ENCODE measurements at regions of chr6 and their contacts with region 1.

Region 1: GRCh38 chr6:127266178-127266891 is at the start of gene RNF146:
- DNase-seq: peak; percentile 55 to 81 (median 75)
- ATAC-seq: peak; percentile 86
- H3K4me3 ChIP-seq: peak within 1 kb of the TSS; percentile 96
- H3K4me3 Mint-ChIP-seq: peak within 1 kb of the TSS; percentile 92 to 100 (median 96)
- H3K27ac ChIP-seq: peak within 1 kb of the TSS; percentile 95
- H3K27ac Mint-ChIP-seq: peak within 1 kb of the TSS; percentile 91 to 100 (median 98)
- H3K4me1 ChIP-seq: peaks cover 12 to 15% of the 10 kb centered on the region in 2 donors
- H3K4me1 Mint-ChIP-seq: peaks cover 28 to 53% (median 41%) of the 10 kb centered on the region in 7 donors
- H3K27me3 ChIP-seq: no peaks in the 10 kb centered on the region
- H3K27me3 Mint-ChIP-seq: peaks cover 0 to 19% (median 0%) of the 10 kb centered on the region in 5 donors
- total RNA-seq, gene RNF146: 17.6 to 38.1 (median 20.8) TPM

Region 2: GRCh38 chr6:125301435-125302391 is 1964.6 kb before region 1 on chr6 and contains the start of gene HDDC2:
- CTCF ChIA-PET with region 1: no interaction called
- POLR2A ChIA-PET with region 1: no interaction called
- intact Hi-C with region 1: loop called (anchors 2 to 5 kb)
- DNase-seq: peak; percentile 23 to 66 (median 33)
- ATAC-seq: peak; percentile 66
- H3K4me3 ChIP-seq: peak within 1 kb of the TSS; percentile 61
- H3K4me3 Mint-ChIP-seq: peak within 1 kb of the TSS; percentile 83 to 95 (median 92)
- H3K27ac ChIP-seq: peak within 1 kb of the TSS; percentile 76
- H3K27ac Mint-ChIP-seq: peak within 1 kb of the TSS; percentile 64 to 95 (median 92)
- H3K4me1 ChIP-seq: peaks cover 25 to 34% of the 10 kb centered on the region in 2 donors
- H3K4me1 Mint-ChIP-seq: peaks cover 43 to 65% (median 63%) of the 10 kb centered on the region in 7 donors
- H3K27me3 ChIP-seq: no peaks in the 10 kb centered on the region
- H3K27me3 Mint-ChIP-seq: peaks cover 0 to 29% (median 0%) of the 10 kb centered on the region in 5 donors
- total RNA-seq, gene HDDC2: 33.4 to 58.5 (median 54.8) TPM

Region 3: DNA sequence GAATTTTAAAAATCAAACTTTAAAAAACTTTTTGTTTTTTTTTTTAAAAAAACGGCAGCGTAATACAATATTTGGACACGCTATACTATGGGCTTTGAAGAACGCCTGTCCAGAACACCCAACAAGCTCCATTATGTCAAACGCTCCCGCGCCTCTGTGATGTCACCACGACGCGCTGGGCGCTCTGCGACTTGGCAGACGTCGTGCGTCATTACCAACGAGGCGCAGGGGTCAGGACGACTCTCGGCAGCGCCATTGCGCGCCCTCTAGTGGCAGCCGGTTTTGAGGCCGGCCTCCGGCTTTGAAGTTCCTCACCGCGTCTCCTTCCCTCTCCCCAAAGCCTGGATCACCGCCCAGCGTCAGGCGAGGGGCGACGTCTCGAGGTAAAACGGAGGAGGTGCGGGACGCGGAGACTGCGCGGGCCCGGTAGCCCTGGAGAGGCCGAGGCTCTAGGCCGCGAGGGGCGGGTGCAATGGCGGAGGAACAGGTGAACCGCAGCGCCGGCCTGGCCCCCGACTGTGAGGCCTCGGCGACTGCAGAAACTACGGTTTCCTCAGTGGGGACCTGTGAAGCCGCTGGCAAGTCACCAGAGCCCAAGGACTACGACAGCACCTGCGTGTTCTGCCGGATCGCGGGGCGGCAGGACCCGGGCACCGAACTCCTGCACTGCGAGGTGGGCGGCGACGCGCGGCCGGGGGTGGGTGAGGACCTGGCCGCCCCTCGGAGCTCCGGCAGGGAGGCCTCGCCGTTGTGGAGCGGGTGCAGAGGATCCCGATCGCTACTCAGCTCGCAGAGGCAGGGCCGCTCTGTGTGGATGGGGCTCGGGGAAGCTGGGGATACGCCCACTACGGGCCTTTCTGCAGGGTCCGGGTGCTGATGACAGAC is 1309.6 kb before region 1 on chr6 and contains the start of gene HINT3:
- CTCF ChIA-PET with region 1: no interaction called
- POLR2A ChIA-PET with region 1: no interaction called
- intact Hi-C with region 1: loop called in 1 of 2 experiments (anchors 1 kb)
- DNase-seq: peak; percentile 94 to 98 (median 97)
- ATAC-seq: peak; percentile 96
- H3K4me3 ChIP-seq: peak within 1 kb of the TSS; percentile 78
- H3K4me3 Mint-ChIP-seq: peak within 1 kb of the TSS in 1 of 10 donors; percentile 69
- H3K27ac ChIP-seq: peak within 1 kb of the TSS; percentile 98
- H3K27ac Mint-ChIP-seq: peak within 1 kb of the TSS in 3 of 9 donors; percentile 62 to 76 (median 73)
- H3K4me1 ChIP-seq: peaks cover 16 to 18% of the 10 kb centered on the region in 2 donors
- H3K4me1 Mint-ChIP-seq: peaks cover 0 to 22% (median 7%) of the 10 kb centered on the region in 7 donors
- H3K27me3 ChIP-seq: no peaks in the 10 kb centered on the region
- H3K27me3 Mint-ChIP-seq: peaks cover 0 to 7% (median 5%) of the 10 kb centered on the region in 5 donors
- total RNA-seq, gene HINT3: 7.7 to 12.4 (median 9.5) TPM

Region 4: GRCh38 chr6:125995972-125996580 is 1270.3 kb before region 1 on chr6:
- CTCF ChIA-PET with region 1: no interaction called
- POLR2A ChIA-PET with region 1: no interaction called
- intact Hi-C with region 1: loop called in 1 of 2 experiments (anchors 1 kb)
- DNase-seq: peak; percentile 51 to 78 (median 72)
- ATAC-seq: peak; percentile 99
- H3K4me3 ChIP-seq: peak overlapping the region; percentile 42
- H3K4me3 Mint-ChIP-seq: peak overlapping the region; percentile 66 to 87 (median 77)
- H3K27ac ChIP-seq: no peak overlapping the region
- H3K27ac Mint-ChIP-seq: peak overlapping the region in 6 of 9 donors; percentile 8 to 63 (median 24)
- H3K4me1 ChIP-seq: no peaks in the 10 kb centered on the region
- H3K4me1 Mint-ChIP-seq: peaks cover 10 to 44% (median 41%) of the 10 kb centered on the region in 7 donors
- H3K27me3 ChIP-seq: no peaks in the 10 kb centered on the region
- H3K27me3 Mint-ChIP-seq: no peaks in the 10 kb centered on the region

Region 5: DNA sequence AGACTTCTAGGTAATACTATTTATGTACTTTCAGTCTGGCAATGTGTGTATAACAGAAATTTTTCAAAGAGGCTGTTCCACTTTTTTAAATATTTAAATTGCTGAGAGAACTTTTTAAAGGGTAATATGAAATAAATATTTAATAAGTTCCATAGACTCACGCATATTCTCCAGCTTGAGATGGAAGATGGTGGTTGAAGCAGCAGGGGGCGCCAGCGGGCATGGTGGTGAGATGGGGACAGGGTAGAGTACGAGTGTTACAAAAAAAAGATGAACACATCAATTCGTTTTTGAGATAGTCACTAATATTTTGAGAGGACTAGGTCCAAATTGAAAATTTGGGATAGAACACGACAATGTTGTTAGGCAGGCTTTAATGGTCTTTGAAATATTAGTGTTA is 79.4 kb before region 1 on chr6:
- CTCF ChIA-PET with region 1: interaction called, 3 read pairs
- POLR2A ChIA-PET with region 1: no interaction called
- intact Hi-C with region 1: loop called (anchors 1 to 2 kb)
- DNase-seq: peak; percentile 1 to 60 (median 22)
- ATAC-seq: peak; percentile 63
- H3K4me3 ChIP-seq: no peak overlapping the region
- H3K4me3 Mint-ChIP-seq: no peak overlapping the region
- H3K27ac ChIP-seq: no peak overlapping the region
- H3K27ac Mint-ChIP-seq: no peak overlapping the region
- H3K4me1 ChIP-seq: no peaks in the 10 kb centered on the region
- H3K4me1 Mint-ChIP-seq: no peaks in the 10 kb centered on the region
- H3K27me3 ChIP-seq: no peaks in the 10 kb centered on the region
- H3K27me3 Mint-ChIP-seq: peaks cover 4 to 14% (median 8%) of the 10 kb centered on the region in 5 donors

Region 6: DNA sequence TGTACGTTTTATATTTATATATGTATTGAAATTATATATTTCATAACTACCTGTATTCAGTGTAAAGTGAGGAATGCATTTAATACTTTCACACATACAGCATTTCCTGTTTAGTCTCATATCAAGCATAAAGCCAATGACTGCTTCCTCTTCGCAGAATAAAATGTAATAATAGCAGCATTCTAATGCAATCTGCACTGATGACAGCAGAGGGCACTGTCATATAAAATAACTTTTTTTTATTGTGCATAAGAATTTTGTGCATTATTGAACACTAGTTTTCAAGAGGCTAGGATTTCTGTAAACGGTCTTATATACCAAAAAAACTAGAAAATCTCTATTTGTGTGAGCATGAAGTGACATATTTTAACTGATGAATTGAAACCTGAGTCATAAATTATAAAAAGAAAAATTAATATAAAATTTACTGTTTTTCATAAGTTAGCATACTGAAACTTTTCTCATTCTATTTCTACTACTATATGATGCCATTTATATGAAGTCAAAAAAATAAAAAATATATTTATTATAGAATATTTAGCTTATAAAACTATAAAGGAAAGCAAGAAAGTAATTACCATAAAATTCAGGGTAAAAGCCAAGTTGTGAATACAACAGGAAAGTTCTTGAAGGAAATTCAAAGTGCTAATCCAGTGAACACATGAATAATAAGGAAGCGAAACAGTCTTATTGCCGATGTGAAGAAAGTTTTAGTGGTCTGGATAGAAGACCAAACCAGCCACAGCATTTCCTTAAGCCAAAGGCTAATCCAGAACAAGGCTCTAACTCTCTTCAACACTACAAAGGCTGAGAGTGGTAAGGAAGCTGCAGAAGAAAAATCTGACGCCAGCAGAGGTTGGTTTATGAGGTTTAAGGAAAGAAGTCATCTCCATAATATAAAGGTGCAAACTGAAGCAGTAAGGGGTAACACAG is 36.7 kb after region 1 on chr6:
- CTCF ChIA-PET with region 1: interaction called, 8 read pairs
- POLR2A ChIA-PET with region 1: interaction called, 4 read pairs
- intact Hi-C with region 1: loop called in 1 of 2 experiments (anchors 1 kb)
- DNase-seq: peak in 7 of 9 donors; percentile 24 to 57 (median 47)
- ATAC-seq: peak; percentile 92
- H3K4me3 ChIP-seq: no peak overlapping the region
- H3K4me3 Mint-ChIP-seq: no peak overlapping the region
- H3K27ac ChIP-seq: no peak overlapping the region
- H3K27ac Mint-ChIP-seq: peak overlapping the region in 4 of 9 donors; percentile 1 to 62 (median 34)
- H3K4me1 ChIP-seq: no peaks in the 10 kb centered on the region
- H3K4me1 Mint-ChIP-seq: peaks cover 9 to 59% (median 49%) of the 10 kb centered on the region in 7 donors
- H3K27me3 ChIP-seq: no peaks in the 10 kb centered on the region
- H3K27me3 Mint-ChIP-seq: no peaks in the 10 kb centered on the region

Region 7: GRCh38 chr6:127420556-127420955 is 154.2 kb after region 1 on chr6:
- CTCF ChIA-PET with region 1: no interaction called
- POLR2A ChIA-PET with region 1: no interaction called
- intact Hi-C with region 1: loop called in 1 of 2 experiments (anchors 1 kb)
- DNase-seq: peak in 8 of 9 donors; percentile 27 to 75 (median 56)
- ATAC-seq: peak; percentile 99
- H3K4me3 ChIP-seq: no peak overlapping the region
- H3K4me3 Mint-ChIP-seq: no peak overlapping the region
- H3K27ac ChIP-seq: no peak overlapping the region
- H3K27ac Mint-ChIP-seq: peak overlapping the region in 6 of 9 donors; percentile 5 to 81 (median 16)
- H3K4me1 ChIP-seq: no peaks in the 10 kb centered on the region
- H3K4me1 Mint-ChIP-seq: peaks cover 0 to 11% (median 5%) of the 10 kb centered on the region in 7 donors
- H3K27me3 ChIP-seq: no peaks in the 10 kb centered on the region
- H3K27me3 Mint-ChIP-seq: no peaks in the 10 kb centered on the region

Measured in naive thymus-derived CD4-positive, alpha-beta T cell (primary cell).